ENCODE measurements at regions of chr11 and their contacts with region 1.

Region 1: DNA sequence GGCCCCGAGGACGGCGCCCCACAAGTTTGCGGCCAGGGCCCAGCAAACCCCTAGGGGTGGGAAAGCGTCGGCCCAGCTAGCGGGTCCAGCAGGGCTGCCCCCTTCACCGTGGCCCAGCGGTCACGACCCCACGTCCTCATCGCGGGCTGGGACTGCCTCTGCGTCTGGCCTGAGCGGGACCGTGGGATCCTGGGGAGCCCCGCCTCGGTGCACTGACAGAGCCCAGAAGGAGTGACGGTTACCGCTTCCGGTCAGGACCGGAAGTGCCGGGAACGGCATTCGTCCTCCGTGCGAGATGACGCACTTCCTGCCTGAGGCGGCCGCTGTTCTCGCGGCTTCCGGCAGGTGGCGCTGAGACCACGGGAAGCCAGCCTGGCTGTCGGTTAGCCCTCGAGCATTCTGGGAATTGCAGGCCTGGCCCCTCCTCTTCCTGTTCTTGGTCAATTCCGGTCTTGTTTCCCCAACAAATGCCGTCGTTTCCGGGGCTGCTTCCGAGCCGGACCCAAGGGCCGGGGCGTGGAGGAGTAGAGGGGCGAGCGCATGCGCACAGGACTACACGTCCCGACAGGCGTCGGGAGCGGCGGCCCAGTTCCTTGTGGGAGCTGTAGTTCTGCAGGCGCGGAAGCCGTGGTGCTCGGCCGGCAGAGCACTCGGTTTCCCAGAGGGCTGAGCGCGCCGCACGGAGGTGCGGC is at the start of gene TSSC4:
- DNase-seq: peak; percentile 99 to 100 (median 100)
- ATAC-seq: peak; percentile 90
- H3K4me3 ChIP-seq: peak within 1 kb of the TSS; percentile 96
- H3K4me3 Mint-ChIP-seq: peak within 1 kb of the TSS; percentile 87 to 97 (median 92)
- H3K27ac ChIP-seq: peak within 1 kb of the TSS; percentile 93
- H3K27ac Mint-ChIP-seq: peak within 1 kb of the TSS; percentile 90 to 97 (median 95)
- H3K4me1 ChIP-seq: peaks cover 19 to 22% of the 10 kb centered on the region in 2 donors
- H3K4me1 Mint-ChIP-seq: peaks cover 0 to 28% (median 16%) of the 10 kb centered on the region in 7 donors
- H3K27me3 ChIP-seq: no peaks in the 10 kb centered on the region
- H3K27me3 Mint-ChIP-seq: peaks cover 0 to 2% (median 0%) of the 10 kb centered on the region in 5 donors
- total RNA-seq, gene TSSC4: 43.6 to 55.0 (median 50.9) TPM

Region 2: DNA sequence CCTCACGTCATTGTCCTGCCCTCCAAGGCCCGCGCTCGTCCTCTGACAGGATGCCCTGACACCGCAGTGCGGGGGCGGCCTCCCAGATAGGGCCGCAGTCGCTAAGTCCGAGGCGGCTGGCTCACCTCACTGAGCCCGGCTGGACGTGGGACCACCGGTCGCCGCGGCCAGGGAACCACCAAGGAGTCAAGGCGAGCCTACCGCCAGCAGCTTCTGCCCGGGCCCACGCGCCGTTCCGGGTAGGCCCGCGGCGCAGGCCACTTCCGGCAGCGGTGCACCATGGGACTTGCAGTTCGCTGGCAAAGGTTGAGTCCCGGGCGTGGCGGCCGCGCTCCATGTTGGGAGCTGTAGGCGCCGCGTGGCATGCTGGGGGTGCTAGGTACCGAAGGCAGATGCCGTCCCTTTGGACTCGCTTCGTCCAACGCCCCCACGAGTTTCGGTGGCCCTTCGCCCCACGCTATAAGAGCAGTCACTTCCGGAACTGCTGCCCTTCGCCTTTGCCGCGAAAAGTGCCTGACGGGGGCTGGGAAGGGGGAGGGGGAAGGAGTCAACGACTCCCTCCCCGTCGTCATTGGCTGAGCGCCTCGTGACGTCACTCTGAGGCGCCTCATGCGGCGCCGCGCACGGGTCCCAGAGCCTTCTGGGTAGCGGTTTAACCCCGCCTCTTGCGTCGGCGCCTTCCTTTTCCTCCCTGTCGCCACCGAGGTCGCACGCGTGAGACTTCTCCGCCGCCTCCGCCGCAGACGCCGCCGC is 1590.8 kb before region 1 on chr11 and contains the start of gene RPLP2:
- CTCF ChIA-PET with region 1: no interaction called
- POLR2A ChIA-PET with region 1: no interaction called
- intact Hi-C with region 1: loop called in 1 of 2 experiments (anchors 2 kb)
- DNase-seq: peak; percentile 95 to 99 (median 98)
- ATAC-seq: peak; percentile 90
- H3K4me3 ChIP-seq: peak within 1 kb of the TSS; percentile 96
- H3K4me3 Mint-ChIP-seq: peak within 1 kb of the TSS; percentile 88 to 96 (median 95)
- H3K27ac ChIP-seq: peak within 1 kb of the TSS; percentile 96
- H3K27ac Mint-ChIP-seq: peak within 1 kb of the TSS; percentile 91 to 99 (median 97)
- H3K4me1 ChIP-seq: peaks cover 24 to 26% of the 10 kb centered on the region in 2 donors
- H3K4me1 Mint-ChIP-seq: peaks cover 8 to 51% (median 32%) of the 10 kb centered on the region in 7 donors
- H3K27me3 ChIP-seq: no peaks in the 10 kb centered on the region
- H3K27me3 Mint-ChIP-seq: no peaks in the 10 kb centered on the region
- total RNA-seq, gene RPLP2: 2,266 to 5,944 (median 5,497) TPM

Region 3: DNA sequence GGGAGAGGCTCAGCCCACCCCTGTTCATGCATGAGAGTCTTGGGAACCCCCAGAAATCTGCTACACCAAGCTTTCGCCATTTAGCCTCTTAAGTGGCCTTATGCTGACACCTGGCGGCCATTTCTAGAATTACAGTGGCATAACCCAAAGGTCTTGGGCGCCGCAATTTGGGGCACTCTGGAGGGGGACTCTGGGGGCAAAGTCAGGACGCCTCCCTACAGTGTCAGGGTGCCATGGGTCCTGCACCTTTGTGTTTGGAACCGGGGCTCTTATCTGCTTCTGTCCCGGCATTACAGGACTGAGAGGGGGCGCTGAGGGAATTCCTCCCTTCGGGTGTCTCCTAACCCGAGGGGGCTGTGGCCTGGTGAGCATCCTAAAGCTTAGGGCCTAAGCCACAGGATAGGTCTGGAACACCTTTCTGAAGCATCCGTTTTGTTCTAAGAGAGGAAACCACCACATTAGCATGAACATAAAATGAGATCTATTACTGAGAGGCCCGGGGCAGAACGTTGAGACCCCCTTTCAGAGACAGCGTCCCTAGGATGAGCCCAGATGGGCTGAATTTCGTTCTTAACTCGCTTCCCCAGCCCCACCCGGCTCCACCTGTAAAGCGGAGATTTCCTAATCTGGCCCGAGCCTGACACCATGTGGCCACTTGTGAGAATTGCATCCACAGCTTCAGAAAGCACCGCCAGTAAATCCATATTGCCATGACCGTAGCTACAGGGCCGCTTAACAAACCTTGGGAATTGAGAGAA is 248.5 kb before region 1 on chr11:
- CTCF ChIA-PET with region 1: no interaction called
- POLR2A ChIA-PET with region 1: no interaction called
- intact Hi-C with region 1: no loop called
- DNase-seq: peak; percentile 58 to 83 (median 78)
- ATAC-seq: peak; percentile 89
- H3K4me3 ChIP-seq: peak overlapping the region; percentile 44
- H3K4me3 Mint-ChIP-seq: peak overlapping the region in 9 of 10 donors; percentile 20 to 71 (median 58)
- H3K27ac ChIP-seq: no peak overlapping the region
- H3K27ac Mint-ChIP-seq: peak overlapping the region in 4 of 9 donors; percentile 25 to 63 (median 32)
- H3K4me1 ChIP-seq: peaks cover 6% of the 10 kb centered on the region in 2 donors
- H3K4me1 Mint-ChIP-seq: peaks cover 0 to 12% (median 6%) of the 10 kb centered on the region in 7 donors
- H3K27me3 ChIP-seq: peaks cover 0 to 8% of the 10 kb centered on the region in 2 donors
- H3K27me3 Mint-ChIP-seq: peaks cover 18 to 40% (median 38%) of the 10 kb centered on the region in 5 donors

Region 4: DNA sequence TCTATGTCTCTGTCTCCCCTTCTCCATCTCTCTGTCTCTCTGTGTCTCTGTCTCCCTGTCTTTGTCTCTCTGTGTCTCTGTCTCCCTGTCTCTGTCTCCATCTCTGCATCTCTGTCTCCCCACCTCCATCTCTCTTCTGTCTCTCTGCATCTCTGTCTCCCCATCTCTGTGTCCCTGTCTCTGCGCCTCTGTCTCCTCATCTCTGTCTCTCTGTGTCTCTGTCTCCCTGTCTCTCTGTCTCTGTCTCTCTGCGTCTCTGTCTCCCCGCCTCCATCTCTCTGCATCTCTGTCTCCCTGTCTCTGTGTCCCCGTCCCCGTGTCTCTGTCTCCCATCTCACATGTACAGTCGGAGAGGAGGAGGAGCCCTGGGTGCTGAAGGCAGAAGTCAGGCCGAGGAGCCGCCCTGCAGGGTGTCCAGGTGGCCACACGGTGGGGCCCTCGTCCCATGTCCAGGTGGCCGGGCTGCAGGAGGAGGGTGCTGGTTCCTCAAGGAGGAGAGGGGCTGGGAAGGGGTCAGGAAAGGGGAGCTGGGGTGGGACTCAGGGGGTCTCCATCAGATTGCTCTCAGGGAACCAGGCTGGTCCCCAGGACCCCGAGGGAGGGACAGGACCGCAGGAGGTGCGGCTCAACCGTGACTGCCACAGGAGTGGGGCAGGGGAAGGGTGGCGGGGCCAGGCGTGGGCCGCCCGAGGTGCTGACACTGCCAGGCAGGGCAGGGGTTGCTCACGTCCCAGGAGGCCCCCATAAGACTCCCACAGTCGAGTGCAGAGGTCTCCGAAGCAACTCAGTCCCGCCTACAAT is 203.0 kb before region 1 on chr11:
- CTCF ChIA-PET with region 1: no interaction called
- POLR2A ChIA-PET with region 1: no interaction called
- intact Hi-C with region 1: loop called in 1 of 2 experiments (anchors 1 kb)
- DNase-seq: peak; percentile 29 to 72 (median 62)
- ATAC-seq: peak; percentile 89
- H3K4me3 ChIP-seq: no peak overlapping the region
- H3K4me3 Mint-ChIP-seq: no peak overlapping the region
- H3K27ac ChIP-seq: no peak overlapping the region
- H3K27ac Mint-ChIP-seq: peak overlapping the region in 2 of 9 donors; percentile 46 to 69
- H3K4me1 ChIP-seq: peaks cover 0 to 4% of the 10 kb centered on the region in 2 donors
- H3K4me1 Mint-ChIP-seq: peaks cover 4 to 16% (median 12%) of the 10 kb centered on the region in 7 donors
- H3K27me3 ChIP-seq: no peaks in the 10 kb centered on the region
- H3K27me3 Mint-ChIP-seq: peaks cover 4 to 13% (median 12%) of the 10 kb centered on the region in 5 donors

Region 5: GRCh38 chr11:2377511-2378443 is 22.4 kb before region 1 on chr11:
- CTCF ChIA-PET with region 1: interaction called, 4 read pairs
- POLR2A ChIA-PET with region 1: interaction called, 21 read pairs
- intact Hi-C with region 1: loop called (anchors 1 kb)
- DNase-seq: peak in 8 of 9 donors; percentile 34 to 73 (median 52)
- ATAC-seq: peak; percentile 54
- H3K4me3 ChIP-seq: peak overlapping the region; percentile 83
- H3K4me3 Mint-ChIP-seq: peak overlapping the region; percentile 71 to 89 (median 84)
- H3K27ac ChIP-seq: peak overlapping the region; percentile 89
- H3K27ac Mint-ChIP-seq: peak overlapping the region in 7 of 9 donors; percentile 57 to 89 (median 81)
- H3K4me1 ChIP-seq: peaks cover 19 to 21% of the 10 kb centered on the region in 2 donors
- H3K4me1 Mint-ChIP-seq: peaks cover 13 to 44% (median 20%) of the 10 kb centered on the region in 7 donors
- H3K27me3 ChIP-seq: no peaks in the 10 kb centered on the region
- H3K27me3 Mint-ChIP-seq: peaks cover 0 to 7% (median 0%) of the 10 kb centered on the region in 5 donors

Region 6: GRCh38 chr11:2444821-2445745 is 44.9 kb after region 1 on chr11 and contains the start of gene KCNQ1:
- CTCF ChIA-PET with region 1: no interaction called
- POLR2A ChIA-PET with region 1: interaction called, 7 read pairs
- intact Hi-C with region 1: loop called (anchors 1 kb)
- DNase-seq: peak in 8 of 9 donors; percentile 26 to 75 (median 46)
- ATAC-seq: peak; percentile 74
- H3K4me3 ChIP-seq: peak within 1 kb of the TSS; percentile 71
- H3K4me3 Mint-ChIP-seq: peak within 1 kb of the TSS; percentile 93 to 99 (median 96)
- H3K27ac ChIP-seq: peak within 1 kb of the TSS; percentile 52
- H3K27ac Mint-ChIP-seq: peak within 1 kb of the TSS; percentile 73 to 92 (median 89)
- H3K4me1 ChIP-seq: peaks cover 22 to 56% of the 10 kb centered on the region in 2 donors
- H3K4me1 Mint-ChIP-seq: peaks cover 22 to 53% (median 41%) of the 10 kb centered on the region in 7 donors
- H3K27me3 ChIP-seq: no peaks in the 10 kb centered on the region
- H3K27me3 Mint-ChIP-seq: peaks cover 0 to 20% (median 0%) of the 10 kb centered on the region in 5 donors
- total RNA-seq, gene KCNQ1: 14.7 to 46.4 (median 41.4) TPM

Region 7: DNA sequence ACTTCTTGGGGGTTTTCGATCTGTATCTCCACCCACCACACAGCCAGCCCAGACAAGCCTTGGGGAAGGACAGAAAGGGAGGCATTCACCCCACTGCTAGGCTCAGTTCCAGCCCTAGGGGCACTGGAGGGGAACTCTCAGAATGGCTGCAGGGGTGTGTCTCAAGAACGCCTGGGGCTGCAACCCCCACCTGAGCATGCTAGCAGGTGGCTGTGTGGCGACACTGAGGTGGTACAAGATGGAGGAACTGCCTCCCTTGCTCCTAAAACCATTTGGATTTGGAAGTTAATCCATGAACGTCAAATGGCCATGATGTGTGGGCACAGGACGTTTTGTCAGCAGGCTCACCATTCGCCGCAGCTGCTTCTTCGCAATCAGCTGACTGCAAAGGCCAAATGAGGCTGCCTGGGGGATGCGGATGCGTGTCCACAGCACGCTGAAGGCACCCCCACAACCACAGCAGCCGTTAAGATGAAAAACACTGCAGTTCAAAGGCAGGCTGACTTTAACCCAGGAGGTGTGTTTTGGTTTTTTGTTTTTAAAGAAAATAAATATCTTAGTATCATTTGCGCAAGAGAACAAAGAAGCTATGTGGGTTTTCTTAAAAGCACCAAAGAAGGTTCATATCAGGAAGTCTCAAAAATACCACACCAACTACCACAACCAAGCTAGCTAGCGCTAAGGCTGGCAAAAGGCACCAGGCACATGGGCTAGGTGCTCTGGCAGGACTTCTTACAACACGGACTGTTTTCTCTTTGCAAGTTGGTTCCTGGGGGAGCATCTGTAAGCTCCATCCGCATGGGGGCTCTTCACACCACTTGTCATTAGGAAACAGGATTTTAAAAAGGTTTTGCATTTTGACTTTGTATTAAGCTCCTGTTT is 614.1 kb after region 1 on chr11:
- CTCF ChIA-PET with region 1: no interaction called
- POLR2A ChIA-PET with region 1: no interaction called
- intact Hi-C with region 1: loop called in 1 of 2 experiments (anchors 2 kb)
- DNase-seq: peak; percentile 43 to 95 (median 90)
- ATAC-seq: peak; percentile 93
- H3K4me3 ChIP-seq: peak overlapping the region; percentile 46
- H3K4me3 Mint-ChIP-seq: peak overlapping the region; percentile 60 to 82 (median 72)
- H3K27ac ChIP-seq: peak overlapping the region; percentile 45
- H3K27ac Mint-ChIP-seq: peak overlapping the region; percentile 80 to 97 (median 93)
- H3K4me1 ChIP-seq: peaks cover 30 to 36% of the 10 kb centered on the region in 2 donors
- H3K4me1 Mint-ChIP-seq: peaks cover 11 to 60% (median 40%) of the 10 kb centered on the region in 7 donors
- H3K27me3 ChIP-seq: no peaks in the 10 kb centered on the region
- H3K27me3 Mint-ChIP-seq: no peaks in the 10 kb centered on the region

Measured in naive thymus-derived CD4-positive, alpha-beta T cell (primary cell).